Right ventricle myocardium inferior (tissue), 1 donor: ENCODE measurements at regions of chr15 and their contacts with region 1.

Region 1: DNA sequence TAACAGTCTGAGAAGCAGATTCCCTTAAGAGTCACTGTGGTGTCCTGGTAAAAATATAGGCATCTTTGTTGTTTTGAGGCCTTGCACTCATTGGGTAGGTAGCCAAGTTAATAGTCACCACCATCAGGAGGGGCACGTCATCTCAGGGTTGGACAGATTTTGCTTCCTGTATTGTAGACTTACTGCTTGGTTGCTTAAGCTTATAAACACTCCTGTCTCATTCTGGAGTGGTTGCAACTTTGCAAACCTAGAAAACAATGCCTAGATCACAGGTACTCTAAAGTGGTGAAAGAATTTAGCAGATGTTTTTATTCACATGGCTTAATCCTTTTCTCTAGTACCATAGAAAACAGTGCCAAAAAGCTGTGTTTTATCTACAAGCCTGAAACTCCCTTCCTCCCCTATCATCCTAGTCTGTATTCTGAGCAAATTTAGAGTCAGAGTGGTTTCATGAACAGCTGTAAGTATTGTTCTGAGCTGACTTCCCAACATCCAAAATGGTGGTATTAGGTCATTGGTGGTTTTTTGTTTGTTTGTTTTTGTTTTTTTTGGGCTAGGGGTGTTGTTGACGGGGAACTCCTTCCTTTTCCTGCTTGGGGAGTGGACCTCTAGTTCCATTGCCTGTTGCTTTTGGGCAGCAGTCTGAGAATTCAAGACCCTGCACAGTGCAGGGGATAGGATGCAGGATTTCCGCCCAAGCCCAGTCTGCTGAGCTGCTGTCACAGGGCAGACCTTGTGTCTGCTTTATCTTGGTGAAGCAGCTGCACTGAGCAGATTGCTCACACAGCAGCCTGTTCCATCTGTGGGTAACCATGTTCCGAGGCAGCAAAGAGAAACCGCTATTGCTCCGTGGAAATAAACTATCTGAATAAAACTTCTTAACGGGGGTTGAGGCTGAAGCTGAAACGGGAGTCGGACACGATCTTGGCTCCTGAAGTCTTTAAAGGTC is 202.0 kb downstream of the AKAP13 start:
- DNase-seq: peak; percentile 78
- ATAC-seq: peak; percentile 60

Region 2: DNA sequence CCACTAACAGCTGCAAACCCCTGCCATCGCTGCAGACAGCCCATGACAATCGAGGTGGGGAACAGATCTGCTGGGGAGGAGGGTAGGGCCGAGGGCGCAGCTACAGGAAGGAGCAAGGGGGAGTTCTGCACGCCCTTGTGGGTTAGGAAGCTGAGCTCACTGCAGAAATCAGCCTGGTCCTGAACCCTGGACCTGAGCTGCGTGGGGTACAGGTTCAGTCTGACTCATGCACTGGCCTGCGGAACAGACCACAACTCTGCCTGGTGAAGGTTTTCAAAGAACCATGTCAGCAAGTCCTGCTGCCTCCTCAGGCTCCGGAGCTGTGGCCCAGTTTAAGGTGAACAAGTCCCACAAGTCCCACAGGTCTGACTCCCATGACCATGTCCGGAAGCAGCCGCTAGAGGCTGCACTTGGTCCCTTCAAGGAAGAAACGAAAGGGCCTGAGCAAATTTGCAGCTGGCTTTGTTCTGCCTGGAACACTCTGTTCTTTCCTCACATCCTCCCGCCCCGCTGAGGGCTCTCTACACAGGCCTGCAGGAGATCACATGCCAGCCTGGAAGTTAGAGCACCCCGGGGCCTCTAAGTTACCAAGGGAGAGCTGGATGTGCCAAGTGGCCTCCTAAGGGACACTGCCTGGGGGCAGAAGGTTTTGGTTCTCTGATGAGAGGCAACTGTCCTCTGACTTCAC is 251.4 kb before region 1 on chr15:
- intact Hi-C with region 1: loop called (anchors 2 kb)
- DNase-seq: peak; percentile 94
- ATAC-seq: peak; percentile 96

Region 3: DNA sequence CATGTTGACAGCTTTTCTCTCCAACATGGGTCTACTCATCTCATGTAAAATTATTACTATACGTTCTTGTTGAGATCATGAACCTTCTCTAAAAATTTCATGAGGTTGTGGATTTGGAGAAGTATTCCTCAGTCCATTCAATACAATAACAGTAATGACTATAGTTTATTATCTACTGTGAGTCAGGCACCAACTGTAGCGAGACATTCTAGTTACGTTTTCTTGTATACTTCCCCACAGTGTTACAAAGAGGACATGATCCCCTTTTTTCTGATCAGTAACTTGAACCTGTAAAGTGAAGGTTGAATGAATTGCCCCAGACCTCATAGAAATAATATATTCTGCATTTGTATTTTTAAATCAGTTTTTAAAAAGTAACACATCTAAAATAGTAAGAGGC is 125.6 kb before region 1 on chr15:
- intact Hi-C with region 1: no loop called
- DNase-seq: no peak
- ATAC-seq: no peak

Region 4: GRCh38 chr15:85504749-85505676 is 77.4 kb before region 1 on chr15:
- intact Hi-C with region 1: loop called (anchors 5 kb)
- DNase-seq: no peak
- ATAC-seq: peak; percentile 50

Region 5: GRCh38 chr15:85534031-85534430 is 48.4 kb before region 1 on chr15:
- intact Hi-C with region 1: loop called (anchors 5 kb)
- DNase-seq: no peak
- ATAC-seq: no peak

Region 6: DNA sequence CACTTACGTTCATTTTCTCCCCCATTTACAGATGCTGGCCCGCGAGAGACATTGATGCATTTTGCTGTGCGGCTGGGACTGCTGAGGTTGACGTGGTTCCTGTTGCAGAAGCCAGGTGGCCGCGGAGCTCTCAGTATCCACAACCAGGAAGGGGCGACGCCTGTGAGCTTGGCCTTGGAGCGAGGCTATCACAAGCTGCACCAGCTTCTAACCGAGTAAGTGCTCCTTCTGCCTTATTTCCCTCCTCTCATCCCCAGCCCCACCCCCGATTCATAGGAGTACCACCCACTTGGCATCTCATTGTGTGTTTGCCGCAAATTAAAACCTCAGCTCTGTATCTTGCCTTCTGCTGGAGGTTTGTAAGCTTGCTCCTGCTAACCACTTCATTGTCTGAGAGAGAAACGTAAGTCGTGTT is 38.7 kb before region 1 on chr15:
- intact Hi-C with region 1: loop called (anchors 5 kb)
- DNase-seq: peak; percentile 91
- ATAC-seq: peak; percentile 65

Region 7: GRCh38 chr15:85618956-85619491 is 36.6 kb after region 1 on chr15:
- intact Hi-C with region 1: loop called (anchors 5 kb)
- DNase-seq: peak; percentile 84
- ATAC-seq: peak; percentile 82

Region 8: DNA sequence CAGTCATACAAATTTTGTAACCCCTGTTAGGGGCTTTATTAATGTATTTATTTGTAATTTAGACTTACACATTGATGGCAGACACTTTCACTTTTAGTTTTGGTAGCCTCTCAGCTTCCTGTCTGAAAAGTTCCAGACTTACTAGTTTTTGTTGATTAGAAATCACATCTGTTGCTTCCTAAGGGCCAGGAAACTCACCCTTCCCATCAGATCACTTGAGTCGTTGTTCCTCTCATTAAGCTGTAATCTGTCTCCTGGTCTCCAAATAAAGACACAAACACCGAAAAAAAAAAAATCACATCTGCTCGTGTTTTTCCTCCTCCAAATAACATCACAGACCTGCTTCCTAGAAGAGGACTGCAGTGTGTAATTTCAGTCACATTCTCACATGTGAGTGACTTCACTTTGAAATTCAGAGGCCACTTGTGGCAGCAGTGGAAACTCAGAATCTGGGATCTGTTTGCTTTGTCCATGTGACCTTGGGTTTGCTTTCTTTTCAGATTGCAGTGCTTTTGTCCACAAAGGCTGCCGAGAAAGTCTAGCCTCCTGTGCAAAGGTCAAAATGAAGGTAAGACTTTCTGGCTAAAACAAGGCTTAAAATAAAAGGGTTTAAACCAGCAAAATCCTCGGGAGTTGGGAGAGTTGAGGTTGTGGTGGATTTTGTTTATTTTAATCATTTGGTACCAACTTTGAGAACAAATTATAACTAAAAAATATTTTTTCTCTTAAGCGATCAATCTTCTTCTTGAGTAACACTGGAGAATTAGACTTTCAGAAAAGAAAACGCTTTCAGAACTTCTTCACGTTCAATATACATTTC is 125.3 kb after region 1 on chr15:
- intact Hi-C with region 1: loop called (anchors 5 kb)
- DNase-seq: no peak
- ATAC-seq: peak; percentile 51